ENCODE measurements at regions of chr12 and their contacts with region 1.

Region 1: GRCh38 chr12:48758221-48758620 is 30.7 kb downstream of the ADCY6 start:
- H3K4me3 Mint-ChIP-seq: no peak overlapping the region
- H3K27ac Mint-ChIP-seq: no peak overlapping the region
- H3K4me1 Mint-ChIP-seq: peaks cover 5% of the 10 kb centered on the region
- H3K27me3 Mint-ChIP-seq: peaks cover 3% of the 10 kb centered on the region

Region 2: DNA sequence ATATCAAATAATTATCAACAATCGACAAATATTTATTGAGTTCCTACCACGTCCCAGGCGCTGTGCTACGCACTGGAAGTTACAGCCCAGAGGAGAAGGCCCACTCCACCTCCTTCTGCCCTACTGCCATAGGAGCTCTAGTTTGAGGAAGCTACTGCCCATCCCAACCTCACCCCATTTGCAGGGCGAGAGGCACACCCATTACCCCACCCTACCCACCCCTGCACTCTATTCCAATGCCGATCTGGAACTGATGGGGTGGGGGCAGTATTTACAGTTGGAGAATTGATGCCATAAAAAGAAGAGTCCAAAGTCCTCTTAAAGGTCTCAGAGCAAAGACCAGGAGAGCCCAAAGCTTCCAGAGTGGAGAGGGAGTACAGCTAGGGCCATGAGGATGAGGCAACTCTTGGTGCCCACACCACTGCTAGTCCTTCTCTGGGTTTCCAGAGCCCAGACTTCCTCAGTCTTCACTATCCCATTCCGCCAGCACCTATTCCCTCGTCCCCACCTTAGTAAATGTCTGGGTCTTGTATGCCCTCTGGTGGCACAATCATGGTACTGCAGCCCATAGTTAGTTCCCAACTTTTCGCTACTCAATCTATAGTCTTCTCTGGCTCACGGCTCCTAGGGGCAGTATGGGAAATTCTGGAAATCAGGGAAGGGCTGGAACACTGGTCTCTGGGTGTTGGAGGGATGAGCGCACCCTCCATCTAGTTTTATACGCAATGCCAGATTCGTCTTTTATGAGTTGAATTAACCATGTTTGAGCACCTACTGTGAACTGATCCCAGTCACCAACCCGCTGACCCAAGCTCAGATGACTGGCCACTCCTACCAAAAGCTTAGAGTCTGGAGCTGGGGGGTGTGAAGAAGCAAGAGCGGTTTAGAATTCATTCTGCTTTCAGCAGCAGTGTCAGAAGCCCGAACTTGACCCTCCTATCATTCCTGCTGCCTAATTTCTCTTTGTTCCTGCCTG is 37.5 kb after region 1 on chr12:
- intact Hi-C with region 1: loop called (anchors 1 kb)
- H3K4me3 Mint-ChIP-seq: no peak overlapping the region
- H3K27ac Mint-ChIP-seq: no peak overlapping the region
- H3K4me1 Mint-ChIP-seq: peaks cover 15% of the 10 kb centered on the region
- H3K27me3 Mint-ChIP-seq: peaks cover 8% of the 10 kb centered on the region

Measured in dendritic cell treated with granulocyte-macrophage colony-stimulating factor and Interleukin-4, amounts not matched to agents 40 ng/mL and 50 ng/mL, for 4 days (primary cell).